ENCODE measurements at regions of chr5 and their contacts with region 1.

Region 1: GRCh38 chr5:150560401-150561193 is 52.7 kb downstream of the NDST1 start:
- DNase-seq: peak; percentile 90
- ATAC-seq: peak; percentile 92
- H3K4me3 Mint-ChIP-seq: no peak overlapping the region
- H3K27ac Mint-ChIP-seq: no peak overlapping the region
- H3K4me1 Mint-ChIP-seq: no peaks in the 10 kb centered on the region
- H3K27me3 Mint-ChIP-seq: peaks cover 3% of the 10 kb centered on the region

Region 2: GRCh38 chr5:150529555-150529954 is 31.0 kb before region 1 on chr5:
- CTCF ChIA-PET with region 1: no interaction called
- DNase-seq: no peak
- ATAC-seq: no peak
- H3K4me3 Mint-ChIP-seq: no peak overlapping the region
- H3K27ac Mint-ChIP-seq: no peak overlapping the region
- H3K4me1 Mint-ChIP-seq: peaks cover 6% of the 10 kb centered on the region
- H3K27me3 Mint-ChIP-seq: no peaks in the 10 kb centered on the region

Region 3: GRCh38 chr5:150544611-150545219 is 15.9 kb before region 1 on chr5:
- CTCF ChIA-PET with region 1: interaction called, 11 read pairs
- DNase-seq: peak; percentile 78
- ATAC-seq: peak; percentile 96
- H3K4me3 Mint-ChIP-seq: no peak overlapping the region
- H3K27ac Mint-ChIP-seq: no peak overlapping the region
- H3K4me1 Mint-ChIP-seq: no peaks in the 10 kb centered on the region
- H3K27me3 Mint-ChIP-seq: no peaks in the 10 kb centered on the region

Region 4: GRCh38 chr5:150573867-150574817 is 13.5 kb after region 1 on chr5:
- CTCF ChIA-PET with region 1: interaction called, 10 read pairs
- DNase-seq: no peak
- ATAC-seq: no peak
- H3K4me3 Mint-ChIP-seq: no peak overlapping the region
- H3K27ac Mint-ChIP-seq: no peak overlapping the region
- H3K4me1 Mint-ChIP-seq: no peaks in the 10 kb centered on the region
- H3K27me3 Mint-ChIP-seq: no peaks in the 10 kb centered on the region

Region 5: DNA sequence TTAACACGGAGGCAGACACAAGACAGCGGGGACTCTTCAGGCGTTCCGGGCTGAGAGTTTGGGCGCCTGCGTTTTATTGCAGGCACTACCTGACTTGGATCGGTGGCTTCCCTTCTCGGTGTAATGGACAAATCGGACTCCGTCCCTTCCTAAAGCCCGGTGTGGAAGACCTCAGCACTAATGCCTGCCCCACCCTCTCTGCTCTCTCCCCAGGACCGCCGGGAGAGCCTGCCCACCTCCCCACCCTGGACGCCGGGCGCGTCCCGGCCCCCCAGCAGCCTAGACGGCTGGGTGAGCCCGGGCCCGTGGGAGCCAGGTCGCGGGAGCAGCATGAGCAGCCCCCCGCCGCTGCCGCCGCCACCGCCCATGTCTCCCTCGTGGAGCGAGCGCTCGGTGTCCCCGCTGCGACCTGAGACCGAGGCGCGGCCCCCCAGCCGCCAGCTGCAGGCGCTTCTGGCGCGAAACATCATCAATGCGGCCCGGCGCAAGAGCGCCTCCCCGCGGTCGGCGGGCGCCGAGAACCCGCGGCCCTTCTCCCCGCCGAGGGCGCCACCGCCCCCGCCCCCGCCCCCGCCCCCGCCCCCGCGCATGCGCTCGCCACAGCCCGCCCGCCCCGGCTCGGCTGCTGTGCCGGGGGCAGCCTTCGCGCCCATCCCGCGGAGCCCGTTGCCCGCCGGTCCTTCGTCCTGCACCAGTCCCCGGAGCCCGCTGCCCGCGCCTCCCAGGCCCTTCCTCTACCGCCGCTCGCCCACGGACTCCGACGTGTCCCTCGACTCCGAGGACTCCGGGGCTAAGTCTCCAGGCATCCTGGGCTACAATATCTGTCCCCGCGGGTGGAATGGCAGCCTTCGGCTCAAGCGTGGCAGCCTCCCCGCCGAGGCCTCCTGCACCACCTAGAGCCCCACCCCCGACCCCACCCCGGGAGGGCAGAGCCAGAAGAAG is 95.9 kb after region 1 on chr5:
- CTCF ChIA-PET with region 1: interaction called, 30 read pairs
- DNase-seq: peak; percentile 82
- ATAC-seq: peak; percentile 89
- H3K4me3 Mint-ChIP-seq: peak overlapping the region; percentile 65
- H3K27ac Mint-ChIP-seq: peak overlapping the region; percentile 51
- H3K4me1 Mint-ChIP-seq: peaks cover 10% of the 10 kb centered on the region
- H3K27me3 Mint-ChIP-seq: peaks cover 12% of the 10 kb centered on the region

Measured in activated CD8-positive, alpha-beta memory T cell treated with anti-CD3 and anti-CD28 coated beads, Interleukin-2, amount 10 ng/mL, durations not matched to agents 7 days and 5 days (primary cell).